GM12878 (cell line): ENCODE measurements at regions of chr14 and their contacts with region 1.

Region 1: DNA sequence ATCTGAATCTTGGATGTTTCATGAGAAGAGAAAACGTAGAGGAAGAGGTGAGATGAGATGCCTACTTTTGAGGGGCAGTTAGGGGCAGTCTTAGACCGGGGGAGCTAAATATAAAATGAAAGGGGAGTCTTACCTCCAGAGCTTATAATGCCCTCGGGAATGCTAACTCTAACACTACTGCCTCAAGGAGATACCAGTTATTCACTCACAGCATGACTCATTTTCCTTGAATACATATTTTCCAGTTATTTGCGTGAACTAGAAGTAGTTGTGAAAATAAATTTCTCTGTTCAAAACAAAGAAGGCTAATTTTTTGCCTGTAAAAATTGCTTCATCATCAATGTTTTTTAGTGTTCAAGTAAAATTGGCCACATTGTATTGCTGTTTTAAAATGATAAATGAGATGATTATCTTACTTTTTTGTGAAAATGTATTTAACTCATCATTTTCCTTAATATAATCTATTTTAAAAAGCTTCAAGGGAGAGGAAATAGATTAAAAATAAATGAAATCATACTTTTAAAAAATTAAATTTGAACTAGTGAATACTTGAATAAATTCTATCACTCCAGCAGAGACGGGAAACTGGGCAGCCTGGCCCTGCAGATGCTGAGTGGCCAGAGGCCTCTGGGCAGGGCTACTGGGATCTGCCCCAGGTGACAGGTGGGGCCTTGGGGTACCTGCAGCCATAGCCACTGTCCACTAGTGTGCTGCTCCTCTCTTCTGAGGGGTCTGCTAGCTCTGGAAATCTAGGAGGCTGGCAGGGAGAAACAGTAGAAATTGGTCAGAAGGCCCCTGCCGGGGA is 339.3 kb downstream of the EGLN3 start:
- DNase-seq: no peak
- ATAC-seq: peak; percentile 29; the same call in 1 of the 3 replicates
- H3K4me3 ChIP-seq: no peak overlapping the region
- H3K27ac ChIP-seq: no peak overlapping the region
- H3K4me1 ChIP-seq: no peaks in the 10 kb centered on the region
- H3K27me3 ChIP-seq: no peaks in the 10 kb centered on the region
- CTCF ChIP-seq: no peak
- EP300 ChIP-seq: no peak
- POLR2A ChIP-seq: no peak
- RAD21 ChIP-seq: no peak

Region 2: GRCh38 chr14:33596211-33597080 is 15.2 kb before region 1 on chr14:
- CTCF ChIA-PET with region 1: interaction called, 3 read pairs
- POLR2A ChIA-PET with region 1: interaction called, 6 read pairs
- RAD21 ChIA-PET with region 1: interaction called, 6 read pairs
- SMC1A ChIA-PET with region 1: interaction called, 25 read pairs
- in situ Hi-C with region 1: no loop called
- intact Hi-C with region 1: no loop called
- DNase-seq: no peak
- ATAC-seq: no peak
- H3K4me3 ChIP-seq: no peak overlapping the region
- H3K27ac ChIP-seq: no peak overlapping the region
- H3K4me1 ChIP-seq: no peaks in the 10 kb centered on the region
- H3K27me3 ChIP-seq: no peaks in the 10 kb centered on the region; a peak in 1 of 4 replicates
- CTCF ChIP-seq: no peak
- EP300 ChIP-seq: no peak
- POLR2A ChIP-seq: no peak
- RAD21 ChIP-seq: no peak

Region 3: DNA sequence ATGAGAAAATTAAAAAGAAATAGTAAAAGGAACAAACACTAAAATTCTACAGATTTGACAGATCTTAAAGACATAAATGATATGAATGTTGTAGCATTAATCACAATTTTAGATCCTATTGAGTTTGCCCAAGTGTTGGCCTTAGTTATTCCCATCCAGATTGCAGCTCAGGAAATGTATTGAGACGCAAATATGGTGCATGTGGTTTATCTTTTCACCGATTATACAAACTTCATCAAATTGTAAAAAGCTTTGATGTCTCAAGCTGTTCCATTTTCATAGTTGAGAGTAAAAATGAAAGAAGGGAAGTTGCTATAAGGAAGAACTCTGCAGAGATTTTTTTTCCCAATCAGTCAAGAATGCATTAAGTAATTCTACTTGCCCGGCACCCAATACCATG is 10.9 kb after region 1 on chr14:
- CTCF ChIA-PET with region 1: interaction called, 5 read pairs
- POLR2A ChIA-PET with region 1: interaction called, 3 read pairs
- RAD21 ChIA-PET with region 1: interaction called, 5 read pairs
- SMC1A ChIA-PET with region 1: interaction called, 27 read pairs
- in situ Hi-C with region 1: no loop called
- intact Hi-C with region 1: no loop called
- DNase-seq: no peak
- ATAC-seq: no peak
- H3K4me3 ChIP-seq: no peak overlapping the region
- H3K27ac ChIP-seq: no peak overlapping the region
- H3K4me1 ChIP-seq: no peaks in the 10 kb centered on the region
- H3K27me3 ChIP-seq: no peaks in the 10 kb centered on the region
- CTCF ChIP-seq: no peak
- EP300 ChIP-seq: no peak
- POLR2A ChIP-seq: no peak
- RAD21 ChIP-seq: no peak